Activated T-helper 1 cell treated with anti-CD3 and anti-CD28 coated beads, Interleukin-12 subunit alpha, Interleukin-12 subunit beta, Interleukin-2, Interleukin-4 antibody, amounts not matched to agents 30 ng/mL and 10 ng/mL and 1 ng/mL, durations not matched to agents 14 hours and 24 hours and 36 hours (primary cell): ENCODE measurements at regions of chr10 and their contacts with region 1.

Region 1: DNA sequence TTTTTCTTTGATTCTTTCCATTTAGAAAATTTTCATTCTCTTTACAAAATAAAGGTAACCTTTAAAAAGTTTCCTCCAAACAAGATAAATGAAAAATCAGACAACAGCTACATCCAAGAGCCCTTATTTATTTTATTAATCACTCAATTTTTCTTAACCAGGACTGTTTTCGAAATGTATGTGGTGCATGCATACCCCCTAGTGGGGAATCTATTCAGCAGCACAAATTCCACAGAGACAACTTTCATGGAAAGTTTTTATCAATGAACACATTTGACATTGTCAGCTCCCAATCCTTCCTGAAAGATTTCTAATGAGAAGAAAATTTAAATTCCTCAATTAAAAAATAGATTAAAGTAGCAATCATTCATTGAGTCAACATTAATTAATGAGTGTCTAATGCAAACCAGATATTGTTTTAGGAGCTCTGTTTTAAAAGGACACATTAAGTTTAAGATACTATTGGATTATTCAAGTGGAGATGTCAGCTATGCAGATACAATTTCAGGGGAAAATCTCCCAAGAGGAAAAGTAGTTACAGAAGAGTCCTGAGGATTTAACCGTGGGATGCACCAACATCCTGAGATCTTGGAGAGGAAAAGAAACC is 5.2 kb upstream of the HTR7 start:
- DNase-seq: no peak
- H3K4me3 Mint-ChIP-seq: no peak overlapping the region
- H3K27ac Mint-ChIP-seq: no peak overlapping the region
- H3K4me1 Mint-ChIP-seq: peaks cover 11% of the 10 kb centered on the region
- H3K27me3 Mint-ChIP-seq: peaks cover 72% of the 10 kb centered on the region

Region 2: GRCh38 chr10:89426230-89426868 is 1436.7 kb before region 1 on chr10:
- intact Hi-C with region 1: loop called (anchors 10 kb)
- DNase-seq: no peak
- H3K4me3 Mint-ChIP-seq: no peak overlapping the region
- H3K27ac Mint-ChIP-seq: no peak overlapping the region
- H3K4me1 Mint-ChIP-seq: no peaks in the 10 kb centered on the region
- H3K27me3 Mint-ChIP-seq: peaks cover 5% of the 10 kb centered on the region

Region 3: GRCh38 chr10:89954787-89955566 is 908.0 kb before region 1 on chr10:
- intact Hi-C with region 1: loop called (anchors 5 kb)
- DNase-seq: no peak
- H3K4me3 Mint-ChIP-seq: no peak overlapping the region
- H3K27ac Mint-ChIP-seq: no peak overlapping the region
- H3K4me1 Mint-ChIP-seq: no peaks in the 10 kb centered on the region
- H3K27me3 Mint-ChIP-seq: no peaks in the 10 kb centered on the region

Region 4: DNA sequence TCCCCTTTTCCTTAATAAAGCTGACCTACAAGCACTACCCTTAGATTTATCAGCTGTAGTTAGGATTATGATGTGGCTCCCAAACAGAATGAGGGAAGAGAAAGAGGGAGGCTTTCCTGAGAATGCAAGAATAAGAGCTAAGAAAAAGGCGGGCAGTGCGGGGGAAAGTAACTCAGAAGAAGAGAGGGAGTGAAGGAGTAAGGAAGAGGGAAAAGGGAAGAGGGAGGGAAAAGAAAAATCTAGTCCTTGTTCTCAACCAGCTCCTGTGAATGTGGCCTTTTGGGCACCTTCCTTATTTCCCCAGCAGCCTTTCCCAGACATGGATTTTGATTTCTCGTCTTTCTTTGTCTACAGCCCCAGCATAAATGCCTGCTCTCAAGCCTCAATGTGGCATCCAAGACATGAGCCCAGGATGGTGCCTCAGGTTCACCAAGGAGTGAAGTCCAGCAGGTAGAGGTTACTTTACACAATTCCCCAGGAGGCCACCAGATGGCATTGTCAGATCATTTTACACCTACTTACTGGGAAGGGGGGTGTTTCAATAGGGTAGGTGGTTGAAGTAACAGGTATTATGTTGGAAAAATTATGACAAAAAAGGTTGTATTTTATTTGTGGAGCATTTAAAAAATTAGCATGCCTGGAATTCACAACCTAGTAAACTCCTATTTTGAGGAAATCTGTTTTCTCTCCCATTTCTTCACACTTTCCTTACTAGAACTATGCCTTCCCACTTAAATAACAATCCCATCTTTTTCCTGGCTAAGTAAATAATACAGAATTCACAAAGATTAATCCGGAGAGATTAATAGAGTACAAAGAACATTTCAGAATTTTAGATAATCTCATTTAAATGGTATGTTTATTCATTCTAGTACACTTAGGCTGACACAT is 111.7 kb before region 1 on chr10:
- intact Hi-C with region 1: loop called (anchors 1 kb)
- DNase-seq: peak; percentile 13
- H3K4me3 Mint-ChIP-seq: no peak overlapping the region
- H3K27ac Mint-ChIP-seq: no peak overlapping the region
- H3K4me1 Mint-ChIP-seq: no peaks in the 10 kb centered on the region
- H3K27me3 Mint-ChIP-seq: peaks cover 14% of the 10 kb centered on the region